Activated CD8-positive, alpha-beta memory T cell treated with anti-CD3 and anti-CD28 coated beads, Interleukin-2, amount 10 ng/mL, durations not matched to agents 7 days and 5 days (primary cell): ENCODE measurements at regions of chr22 and their contacts with region 1.

Region 1: GRCh38 chr22:41908411-41909309 is 6.2 kb downstream of the SHISA8 start:
- DNase-seq: peak; percentile 73
- ATAC-seq: peak; percentile 37
- H3K4me3 Mint-ChIP-seq: peak overlapping the region; percentile 32
- H3K27ac Mint-ChIP-seq: peak overlapping the region; percentile 63
- H3K4me1 Mint-ChIP-seq: peaks cover 27% of the 10 kb centered on the region
- H3K27me3 Mint-ChIP-seq: peaks cover 38% of the 10 kb centered on the region

Region 2: GRCh38 chr22:41888627-41889200 is 19.9 kb before region 1 on chr22:
- CTCF ChIA-PET with region 1: no interaction called
- DNase-seq: no peak
- ATAC-seq: no peak
- H3K4me3 Mint-ChIP-seq: no peak overlapping the region
- H3K27ac Mint-ChIP-seq: no peak overlapping the region
- H3K4me1 Mint-ChIP-seq: no peaks in the 10 kb centered on the region
- H3K27me3 Mint-ChIP-seq: no peaks in the 10 kb centered on the region

Region 3: DNA sequence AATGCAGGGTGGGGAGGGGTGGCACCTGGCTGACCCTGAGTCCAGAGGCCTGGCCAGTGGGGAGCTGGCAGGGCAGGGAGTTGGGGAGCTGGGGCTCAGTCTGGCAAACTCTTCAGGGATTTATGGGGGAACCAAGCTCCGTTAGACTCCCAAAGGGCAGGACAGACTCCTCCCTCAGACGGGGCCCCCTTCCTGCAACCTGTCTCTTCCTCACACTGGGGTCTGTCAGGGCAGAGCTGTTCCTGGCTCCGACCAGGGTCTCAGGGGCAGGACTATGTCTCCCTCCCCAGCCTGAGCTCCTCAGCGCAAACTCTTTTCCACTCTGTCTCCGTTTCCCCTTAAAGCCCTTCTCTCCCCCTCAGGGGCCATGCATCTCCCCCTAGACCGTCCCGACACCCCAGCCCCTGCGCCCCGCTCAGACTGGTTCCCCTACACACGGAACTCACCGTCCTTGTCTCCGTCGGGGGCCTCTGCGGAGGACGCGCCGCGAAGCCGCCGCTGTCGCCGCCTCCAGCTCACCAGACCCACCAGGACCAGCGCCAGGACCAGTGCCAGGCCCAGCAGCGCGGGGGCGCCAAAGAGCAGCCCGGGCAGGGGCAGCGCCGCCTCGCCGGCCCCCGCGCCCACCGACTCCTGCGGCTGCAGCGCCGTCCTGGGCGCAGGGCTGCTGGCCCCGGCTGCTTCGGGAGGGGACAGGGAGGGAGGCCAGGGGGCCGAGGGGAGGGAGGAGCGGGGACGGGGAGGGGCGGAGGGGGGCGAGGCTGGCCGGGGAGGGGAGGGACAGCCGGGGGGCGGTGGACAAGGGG is 17.2 kb after region 1 on chr22:
- CTCF ChIA-PET with region 1: interaction called, 12 read pairs
- DNase-seq: peak; percentile 82
- ATAC-seq: peak; percentile 89
- H3K4me3 Mint-ChIP-seq: peak overlapping the region; percentile 57
- H3K27ac Mint-ChIP-seq: no peak overlapping the region
- H3K4me1 Mint-ChIP-seq: peaks cover 7% of the 10 kb centered on the region
- H3K27me3 Mint-ChIP-seq: peaks cover 16% of the 10 kb centered on the region